ENCODE measurements at regions of chr1 and their contacts with region 1.

Region 1: GRCh38 chr1:235843461-235843961 is 23.2 kb downstream of the LYST start:
- DNase-seq: peak; percentile 39
- H3K4me3 ChIP-seq: no peak overlapping the region
- H3K27ac ChIP-seq: no peak overlapping the region
- H3K4me1 ChIP-seq: peaks cover 26% of the 10 kb centered on the region
- CTCF ChIP-seq: peak; percentile 82

Region 2: GRCh38 chr1:235567812-235568503 is 275.6 kb before region 1 on chr1:
- CTCF ChIA-PET with region 1: no interaction called
- POLR2A ChIA-PET with region 1: no interaction called
- intact Hi-C with region 1: no loop called
- DNase-seq: no peak
- H3K4me3 ChIP-seq: no peak overlapping the region
- H3K27ac ChIP-seq: no peak overlapping the region
- H3K4me1 ChIP-seq: no peaks in the 10 kb centered on the region
- CTCF ChIP-seq: no peak

Region 3: GRCh38 chr1:235821361-235821981 is 22.0 kb before region 1 on chr1:
- CTCF ChIA-PET with region 1: interaction called, 4 read pairs
- POLR2A ChIA-PET with region 1: interaction called, 10 read pairs
- intact Hi-C with region 1: no loop called
- DNase-seq: no peak
- H3K4me3 ChIP-seq: no peak overlapping the region
- H3K27ac ChIP-seq: no peak overlapping the region
- H3K4me1 ChIP-seq: no peaks in the 10 kb centered on the region
- CTCF ChIP-seq: no peak

Region 4: GRCh38 chr1:235831148-235831547 is 12.4 kb before region 1 on chr1:
- CTCF ChIA-PET with region 1: interaction called, 6 read pairs
- POLR2A ChIA-PET with region 1: interaction called, 20 read pairs
- intact Hi-C with region 1: no loop called
- DNase-seq: no peak
- H3K4me3 ChIP-seq: no peak overlapping the region
- H3K27ac ChIP-seq: no peak overlapping the region
- H3K4me1 ChIP-seq: no peaks in the 10 kb centered on the region
- CTCF ChIP-seq: no peak

Region 5: DNA sequence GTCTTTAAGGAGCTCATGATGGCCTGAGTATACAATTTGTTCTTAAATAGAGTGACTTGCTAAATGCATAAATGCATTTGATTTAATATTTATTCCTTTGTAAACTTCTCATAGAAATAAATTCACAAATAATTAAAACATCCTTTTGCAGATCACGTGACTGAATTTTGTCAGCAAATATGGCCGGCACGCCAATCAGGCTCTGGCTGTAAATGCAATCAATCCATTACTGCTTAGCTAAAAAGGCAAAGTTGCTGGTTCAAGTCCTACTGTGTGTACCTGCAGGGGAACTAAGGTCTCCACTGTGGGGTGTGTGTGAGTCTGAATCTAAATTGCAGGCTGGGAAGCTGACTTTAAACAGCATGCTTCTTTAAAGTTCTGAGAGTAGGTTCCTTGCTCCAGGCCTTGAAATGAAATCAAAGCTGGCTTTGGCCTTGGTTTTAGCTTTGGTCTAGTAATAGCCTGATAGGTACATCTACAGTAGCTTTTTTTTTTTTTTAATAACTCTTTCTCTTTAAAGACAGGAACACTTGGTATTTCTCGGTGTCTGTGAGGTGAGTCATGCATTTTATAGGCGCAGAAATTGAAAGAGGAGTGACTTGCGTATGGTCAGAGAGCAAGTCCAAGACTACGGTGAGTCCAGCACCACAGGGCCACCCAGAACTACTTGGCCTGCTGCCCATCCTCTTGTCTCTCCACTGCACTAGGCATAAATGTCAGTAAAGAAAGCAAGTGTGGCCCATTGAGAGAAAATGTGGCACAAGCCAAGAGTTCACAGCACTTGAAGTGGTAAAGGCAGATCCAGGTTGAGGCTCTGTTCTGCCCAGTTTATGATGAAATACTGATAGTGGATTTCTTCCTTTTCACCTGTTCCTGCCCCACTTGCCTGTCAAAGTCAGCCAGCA is 59.4 kb after region 1 on chr1:
- CTCF ChIA-PET with region 1: no interaction called
- POLR2A ChIA-PET with region 1: no interaction called
- intact Hi-C with region 1: no loop called
- DNase-seq: no peak
- H3K4me3 ChIP-seq: no peak overlapping the region
- H3K27ac ChIP-seq: no peak overlapping the region
- H3K4me1 ChIP-seq: no peaks in the 10 kb centered on the region
- CTCF ChIP-seq: no peak

Region 6: GRCh38 chr1:235923466-235924021 is 80.0 kb after region 1 on chr1:
- CTCF ChIA-PET with region 1: no interaction called
- POLR2A ChIA-PET with region 1: no interaction called
- intact Hi-C with region 1: no loop called
- DNase-seq: no peak
- H3K4me3 ChIP-seq: no peak overlapping the region
- H3K27ac ChIP-seq: no peak overlapping the region
- H3K4me1 ChIP-seq: peaks cover 10% of the 10 kb centered on the region
- CTCF ChIP-seq: no peak

Measured in OCI-LY7 (cell line).